Caco-2 (cell line): ENCODE measurements at regions of chr13 and their contacts with region 1.

Region 1: DNA sequence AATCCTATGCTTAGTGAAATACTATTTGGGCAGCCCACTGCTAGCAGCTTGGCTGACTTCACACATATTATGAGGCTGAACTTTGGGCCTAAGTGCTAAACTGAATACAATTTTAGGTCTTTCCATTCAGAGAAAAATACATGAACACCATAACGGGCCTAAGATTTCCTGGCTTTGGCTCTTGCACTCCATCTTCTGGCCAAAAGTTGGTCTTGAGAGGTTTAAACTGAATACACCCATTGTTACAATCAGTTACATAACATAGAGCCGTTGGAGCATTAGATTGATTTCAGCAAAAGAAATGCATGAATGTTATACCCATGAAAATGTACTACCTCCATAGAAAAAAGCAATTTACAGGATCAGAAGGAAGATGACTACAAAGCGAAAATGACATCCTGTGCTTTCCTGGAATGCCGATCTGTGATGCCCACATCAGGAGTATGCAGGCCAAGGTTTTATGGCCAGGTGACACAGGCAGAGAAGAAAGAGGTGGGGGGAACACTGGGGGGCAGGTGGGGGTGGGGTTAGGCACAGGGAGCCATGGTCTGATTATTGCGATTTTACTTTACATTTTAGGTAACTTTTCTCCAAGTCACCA is 11.1 kb upstream of the SHISA2 start:
- DNase-seq: peak; percentile 50 to 59
- H3K4me3 ChIP-seq: no peak overlapping the region
- H3K4me3 Mint-ChIP-seq: no peak overlapping the region
- H3K27ac Mint-ChIP-seq: no peak overlapping the region
- H3K4me1 ChIP-seq: no peaks in the 10 kb centered on the region
- H3K4me1 Mint-ChIP-seq: no peaks in the 10 kb centered on the region
- H3K27me3 ChIP-seq: no peaks in the 10 kb centered on the region; the same call in 1 of the 2 replicates
- H3K27me3 Mint-ChIP-seq: peaks cover 6% of the 10 kb centered on the region
- CTCF ChIP-seq: peak; percentile 79 to 85

Region 2: GRCh38 chr13:25574437-25575411 is 488.2 kb before region 1 on chr13:
- CTCF ChIA-PET with region 1: interaction called, 4 read pairs
- POLR2A ChIA-PET with region 1: no interaction called
- intact Hi-C with region 1: loop called (anchors 1 kb)
- DNase-seq: peak; percentile 84 to 87
- H3K4me3 ChIP-seq: no peak overlapping the region
- H3K4me3 Mint-ChIP-seq: no peak overlapping the region
- H3K27ac Mint-ChIP-seq: no peak overlapping the region
- H3K4me1 ChIP-seq: no peaks in the 10 kb centered on the region
- H3K4me1 Mint-ChIP-seq: peaks cover 6% of the 10 kb centered on the region
- H3K27me3 ChIP-seq: no peaks in the 10 kb centered on the region
- H3K27me3 Mint-ChIP-seq: peaks cover 22% of the 10 kb centered on the region
- CTCF ChIP-seq: peak; percentile 88 to 96

Region 3: DNA sequence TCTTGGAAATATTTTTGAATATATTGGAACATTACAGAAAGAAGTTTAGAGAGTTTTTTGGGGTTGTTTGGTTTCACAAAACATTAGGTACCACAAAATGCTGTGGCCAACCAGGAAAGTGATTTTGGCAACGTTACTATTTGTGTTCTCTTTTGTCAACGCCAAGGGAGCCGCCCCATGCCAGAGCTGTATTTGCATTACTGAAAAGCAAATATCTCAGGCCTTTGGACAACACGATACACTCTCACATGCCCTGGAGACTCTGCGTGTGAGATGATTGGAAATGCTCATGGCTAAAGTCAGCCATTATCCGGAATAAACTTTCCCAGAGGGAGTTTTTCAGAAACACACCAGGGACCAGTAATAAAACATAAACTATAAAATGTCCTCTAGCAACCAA is 335.7 kb before region 1 on chr13:
- CTCF ChIA-PET with region 1: no interaction called
- POLR2A ChIA-PET with region 1: no interaction called
- intact Hi-C with region 1: loop called (anchors 10 kb)
- DNase-seq: no peak
- H3K4me3 ChIP-seq: no peak overlapping the region
- H3K4me3 Mint-ChIP-seq: no peak overlapping the region
- H3K27ac Mint-ChIP-seq: no peak overlapping the region
- H3K4me1 ChIP-seq: no peaks in the 10 kb centered on the region
- H3K4me1 Mint-ChIP-seq: no peaks in the 10 kb centered on the region
- H3K27me3 ChIP-seq: no peaks in the 10 kb centered on the region
- H3K27me3 Mint-ChIP-seq: peaks cover 20% of the 10 kb centered on the region
- CTCF ChIP-seq: no peak

Region 4: DNA sequence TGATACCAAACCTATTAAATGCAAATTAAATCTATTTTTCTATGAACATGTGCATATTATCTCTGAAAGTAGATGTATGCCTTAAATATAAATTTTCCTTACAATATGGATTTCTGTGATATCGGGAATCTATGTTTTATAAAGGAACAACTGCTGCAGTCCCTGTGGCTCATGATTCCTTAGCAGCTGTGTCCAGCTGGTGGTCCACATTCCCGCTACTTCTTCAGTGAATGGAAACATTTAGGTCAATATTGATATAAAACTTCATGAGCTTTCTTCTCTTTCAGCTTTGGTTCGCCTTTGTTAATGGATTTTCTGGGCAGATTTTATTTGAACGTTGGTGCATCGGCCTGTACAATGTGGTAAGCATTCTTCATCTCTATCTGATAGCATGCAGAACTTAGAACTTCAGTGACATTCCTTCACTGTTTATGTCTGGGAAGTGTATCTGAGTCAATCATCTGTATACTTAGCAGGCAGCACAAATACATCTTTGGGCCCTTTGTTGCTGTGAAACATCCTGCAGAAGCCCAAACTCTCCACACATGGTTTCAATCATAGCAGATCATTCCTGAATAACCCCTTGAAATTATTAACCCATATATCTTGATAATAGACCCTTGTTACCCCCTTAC is 235.0 kb before region 1 on chr13:
- CTCF ChIA-PET with region 1: no interaction called
- POLR2A ChIA-PET with region 1: no interaction called
- intact Hi-C with region 1: loop called (anchors 2 kb)
- DNase-seq: no peak
- H3K4me3 ChIP-seq: no peak overlapping the region
- H3K4me3 Mint-ChIP-seq: no peak overlapping the region
- H3K27ac Mint-ChIP-seq: no peak overlapping the region
- H3K4me1 ChIP-seq: no peaks in the 10 kb centered on the region
- H3K4me1 Mint-ChIP-seq: peaks cover 5% of the 10 kb centered on the region
- H3K27me3 ChIP-seq: no peaks in the 10 kb centered on the region
- H3K27me3 Mint-ChIP-seq: peaks cover 22% of the 10 kb centered on the region
- CTCF ChIP-seq: no peak

Region 5: DNA sequence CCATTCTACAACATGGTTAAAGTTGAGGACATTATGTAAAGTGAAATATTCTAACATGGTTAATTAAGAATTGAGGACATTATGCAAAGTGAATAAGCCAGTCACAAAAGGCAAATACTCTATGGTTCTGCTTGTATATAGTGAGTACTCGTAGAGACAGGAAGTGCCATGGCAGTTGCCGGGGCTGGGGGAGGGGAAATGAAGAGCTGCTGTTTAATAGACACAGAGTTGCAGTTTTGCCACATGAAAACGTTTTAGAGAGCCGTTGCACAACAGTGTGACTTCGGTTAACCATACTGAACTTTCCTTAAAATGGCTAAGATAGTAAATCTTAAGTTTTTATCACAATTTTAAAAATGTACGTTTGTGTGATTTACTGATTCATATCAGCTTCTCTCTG is 188.0 kb before region 1 on chr13:
- CTCF ChIA-PET with region 1: no interaction called
- POLR2A ChIA-PET with region 1: no interaction called
- intact Hi-C with region 1: loop called (anchors 5 kb)
- DNase-seq: no peak
- H3K4me3 ChIP-seq: no peak overlapping the region
- H3K4me3 Mint-ChIP-seq: no peak overlapping the region
- H3K27ac Mint-ChIP-seq: no peak overlapping the region
- H3K4me1 ChIP-seq: no peaks in the 10 kb centered on the region
- H3K4me1 Mint-ChIP-seq: peaks cover 11% of the 10 kb centered on the region
- H3K27me3 ChIP-seq: no peaks in the 10 kb centered on the region; the same call in 1 of the 2 replicates
- H3K27me3 Mint-ChIP-seq: no peaks in the 10 kb centered on the region
- CTCF ChIP-seq: no peak

Region 6: GRCh38 chr13:25980255-25980654 is 82.7 kb before region 1 on chr13:
- CTCF ChIA-PET with region 1: interaction called, 3 read pairs
- POLR2A ChIA-PET with region 1: no interaction called
- intact Hi-C with region 1: loop called (anchors 1 kb)
- DNase-seq: peak in 1 of 2 experiments; percentile 44
- H3K4me3 ChIP-seq: no peak overlapping the region
- H3K4me3 Mint-ChIP-seq: no peak overlapping the region
- H3K27ac Mint-ChIP-seq: peak overlapping the region; percentile 88
- H3K4me1 ChIP-seq: peaks cover 23% of the 10 kb centered on the region
- H3K4me1 Mint-ChIP-seq: peaks cover 35% of the 10 kb centered on the region
- H3K27me3 ChIP-seq: no peaks in the 10 kb centered on the region
- H3K27me3 Mint-ChIP-seq: no peaks in the 10 kb centered on the region
- CTCF ChIP-seq: peak; percentile 43 to 51

Region 7: DNA sequence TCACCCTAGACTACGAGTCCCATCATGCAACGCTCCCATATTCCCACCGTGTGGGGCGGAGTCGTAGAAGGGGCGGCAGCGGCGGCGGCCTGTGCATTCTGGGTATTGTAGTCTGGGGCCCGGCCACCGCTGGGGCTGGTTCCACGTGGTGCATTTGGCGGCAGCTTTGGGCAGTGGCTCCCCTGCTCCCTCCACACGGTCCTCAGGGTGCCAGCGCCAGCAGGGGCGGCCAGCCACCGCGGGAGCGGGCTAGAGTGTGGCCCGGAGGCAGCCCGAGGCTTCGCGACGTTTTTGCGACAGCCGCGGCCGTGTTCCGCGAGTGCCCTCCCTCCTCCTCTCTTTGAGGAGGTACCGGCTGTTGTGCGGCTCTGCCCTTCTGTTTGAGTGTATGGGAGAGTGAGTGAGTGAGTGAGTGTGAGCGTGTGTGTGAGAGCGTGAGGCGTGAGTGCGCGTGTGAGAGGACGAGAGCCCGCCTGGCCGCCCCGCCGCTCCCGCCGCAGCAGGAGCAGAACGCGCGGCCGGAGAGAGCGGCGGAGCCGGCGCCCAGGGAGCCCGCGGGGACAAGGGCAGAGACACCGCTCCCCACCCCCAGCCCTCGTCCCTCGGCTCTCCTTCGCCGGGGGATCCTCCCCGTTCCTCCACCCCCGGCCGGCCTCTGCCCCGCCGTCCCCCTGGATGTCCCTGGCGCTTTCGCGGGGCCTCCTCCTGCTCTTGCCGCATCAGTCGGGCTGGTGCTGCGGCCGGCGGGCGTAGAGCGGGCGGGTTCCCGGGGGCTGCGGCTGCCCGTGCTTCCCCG is 191.0 kb after region 1 on chr13 and contains the start of gene CDK8:
- CTCF ChIA-PET with region 1: no interaction called
- POLR2A ChIA-PET with region 1: no interaction called
- intact Hi-C with region 1: no loop called
- DNase-seq: peak; percentile 94
- H3K4me3 ChIP-seq: peak within 1 kb of the TSS; percentile 96
- H3K4me3 Mint-ChIP-seq: peak within 1 kb of the TSS; percentile 89
- H3K27ac Mint-ChIP-seq: peak within 1 kb of the TSS; percentile 91
- H3K4me1 ChIP-seq: no peaks in the 10 kb centered on the region
- H3K4me1 Mint-ChIP-seq: peaks cover 17% of the 10 kb centered on the region
- H3K27me3 ChIP-seq: no peaks in the 10 kb centered on the region
- H3K27me3 Mint-ChIP-seq: no peaks in the 10 kb centered on the region
- CTCF ChIP-seq: peak in 1 of 2 experiments; percentile 1
- total RNA-seq, gene CDK8: 35.1 and 35.9 TPM in 2 replicates